CD4-positive, alpha-beta memory T cell (primary cell): ENCODE measurements at regions of chr1 and their contacts with region 1.

Region 1: GRCh38 chr1:46223472-46223943 is 20.4 kb downstream of the LURAP1 start:
- DNase-seq: peak; percentile 41 to 59 (median 49)
- H3K4me3 ChIP-seq: no peak overlapping the region
- H3K4me3 Mint-ChIP-seq: no peak overlapping the region
- H3K27ac ChIP-seq: no peak overlapping the region
- H3K27ac Mint-ChIP-seq: peak overlapping the region in 1 of 7 donors; percentile 74
- H3K4me1 ChIP-seq: no peaks in the 10 kb centered on the region
- H3K4me1 Mint-ChIP-seq: peaks cover 0 to 5% (median 4%) of the 10 kb centered on the region in 4 donors
- H3K27me3 ChIP-seq: no peaks in the 10 kb centered on the region
- H3K27me3 Mint-ChIP-seq: no peaks in the 10 kb centered on the region

Region 2: GRCh38 chr1:46036894-46037839 is 186.3 kb before region 1 on chr1:
- CTCF ChIA-PET with region 1: interaction called, 25 read pairs
- POLR2A ChIA-PET with region 1: no interaction called
- intact Hi-C with region 1: loop called (anchors 1 kb)
- DNase-seq: peak; percentile 73 to 76 (median 75)
- H3K4me3 ChIP-seq: no peak overlapping the region
- H3K4me3 Mint-ChIP-seq: no peak overlapping the region
- H3K27ac ChIP-seq: no peak overlapping the region
- H3K27ac Mint-ChIP-seq: no peak overlapping the region
- H3K4me1 ChIP-seq: no peaks in the 10 kb centered on the region
- H3K4me1 Mint-ChIP-seq: no peaks in the 10 kb centered on the region
- H3K27me3 ChIP-seq: no peaks in the 10 kb centered on the region
- H3K27me3 Mint-ChIP-seq: no peaks in the 10 kb centered on the region

Region 3: GRCh38 chr1:46179138-46180081 is 44.1 kb before region 1 on chr1:
- CTCF ChIA-PET with region 1: interaction called, 12 read pairs
- POLR2A ChIA-PET with region 1: no interaction called
- intact Hi-C with region 1: loop called (anchors 1 kb)
- DNase-seq: peak; percentile 51 to 66 (median 55)
- H3K4me3 ChIP-seq: no peak overlapping the region
- H3K4me3 Mint-ChIP-seq: no peak overlapping the region
- H3K27ac ChIP-seq: no peak overlapping the region
- H3K27ac Mint-ChIP-seq: no peak overlapping the region
- H3K4me1 ChIP-seq: no peaks in the 10 kb centered on the region
- H3K4me1 Mint-ChIP-seq: peaks cover 0 to 3% (median under 1%) of the 10 kb centered on the region in 4 donors
- H3K27me3 ChIP-seq: no peaks in the 10 kb centered on the region
- H3K27me3 Mint-ChIP-seq: no peaks in the 10 kb centered on the region

Region 4: DNA sequence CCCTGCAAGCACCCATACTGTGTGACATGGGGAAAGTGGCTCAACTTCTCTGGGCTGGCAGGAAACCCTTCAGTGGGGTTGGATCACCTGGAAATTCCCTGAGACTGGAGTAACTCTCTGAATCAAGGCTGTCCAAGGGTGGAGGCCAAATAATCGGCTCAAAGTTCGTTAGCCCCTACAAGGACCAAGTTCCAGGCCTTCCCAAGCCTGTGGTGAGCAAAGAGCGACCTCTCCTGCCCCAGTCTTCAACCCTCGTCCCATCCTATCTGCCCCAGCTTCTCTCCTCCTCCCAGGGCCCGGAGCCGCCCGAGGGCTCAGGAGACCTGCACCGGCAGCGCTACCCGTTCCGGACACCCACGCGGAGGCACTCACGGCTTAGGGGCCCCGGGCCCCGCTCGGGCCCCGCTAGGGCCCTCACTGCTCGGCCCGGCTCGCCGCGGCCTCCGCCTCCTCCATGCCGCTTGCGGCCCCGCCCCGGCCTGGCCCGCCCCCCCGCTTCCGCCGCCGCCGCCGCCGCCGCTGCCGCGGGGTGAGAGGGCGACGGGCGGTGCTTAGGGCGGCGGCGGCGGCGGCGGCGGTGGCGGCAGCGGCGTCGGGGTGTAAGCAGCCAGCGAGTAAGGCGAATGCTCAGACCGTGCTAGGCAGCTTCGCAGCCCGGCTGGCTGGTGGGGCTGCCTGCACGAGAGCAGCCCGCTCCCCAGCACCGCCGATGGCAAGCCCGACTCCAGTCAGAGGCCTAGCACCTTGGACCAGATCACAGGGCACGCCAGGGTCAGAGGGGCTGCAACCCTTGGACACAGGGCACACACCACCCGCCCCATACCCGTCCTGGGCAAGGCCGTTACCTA is 25.3 kb before region 1 on chr1 and contains the start of gene POMGNT1:
- CTCF ChIA-PET with region 1: interaction called, 14 read pairs
- POLR2A ChIA-PET with region 1: interaction called, 3 read pairs
- intact Hi-C with region 1: no loop called
- DNase-seq: peak; percentile 69 to 81 (median 78)
- H3K4me3 ChIP-seq: peak within 1 kb of the TSS; percentile 78 to 86
- H3K4me3 Mint-ChIP-seq: peak within 1 kb of the TSS; percentile 83 to 89 (median 88)
- H3K27ac ChIP-seq: peak within 1 kb of the TSS; percentile 76
- H3K27ac Mint-ChIP-seq: peak within 1 kb of the TSS; percentile 38 to 88 (median 79)
- H3K4me1 ChIP-seq: peaks cover 33% of the 10 kb centered on the region
- H3K4me1 Mint-ChIP-seq: peaks cover 12 to 39% (median 25%) of the 10 kb centered on the region in 4 donors
- H3K27me3 ChIP-seq: no peaks in the 10 kb centered on the region
- H3K27me3 Mint-ChIP-seq: peaks cover 0 to 1% of the 10 kb centered on the region in 2 donors
- total RNA-seq, gene POMGNT1: 36.0 to 41.4 TPM

Region 5: GRCh38 chr1:46236882-46237281 is 13.4 kb after region 1 on chr1:
- CTCF ChIA-PET with region 1: interaction called, 25 read pairs
- POLR2A ChIA-PET with region 1: no interaction called
- intact Hi-C with region 1: no loop called
- DNase-seq: no peak
- H3K4me3 ChIP-seq: no peak overlapping the region
- H3K4me3 Mint-ChIP-seq: no peak overlapping the region
- H3K27ac ChIP-seq: no peak overlapping the region
- H3K27ac Mint-ChIP-seq: no peak overlapping the region
- H3K4me1 ChIP-seq: no peaks in the 10 kb centered on the region
- H3K4me1 Mint-ChIP-seq: no peaks in the 10 kb centered on the region
- H3K27me3 ChIP-seq: no peaks in the 10 kb centered on the region
- H3K27me3 Mint-ChIP-seq: peaks cover 2 to 3% of the 10 kb centered on the region in 2 donors

Region 6: DNA sequence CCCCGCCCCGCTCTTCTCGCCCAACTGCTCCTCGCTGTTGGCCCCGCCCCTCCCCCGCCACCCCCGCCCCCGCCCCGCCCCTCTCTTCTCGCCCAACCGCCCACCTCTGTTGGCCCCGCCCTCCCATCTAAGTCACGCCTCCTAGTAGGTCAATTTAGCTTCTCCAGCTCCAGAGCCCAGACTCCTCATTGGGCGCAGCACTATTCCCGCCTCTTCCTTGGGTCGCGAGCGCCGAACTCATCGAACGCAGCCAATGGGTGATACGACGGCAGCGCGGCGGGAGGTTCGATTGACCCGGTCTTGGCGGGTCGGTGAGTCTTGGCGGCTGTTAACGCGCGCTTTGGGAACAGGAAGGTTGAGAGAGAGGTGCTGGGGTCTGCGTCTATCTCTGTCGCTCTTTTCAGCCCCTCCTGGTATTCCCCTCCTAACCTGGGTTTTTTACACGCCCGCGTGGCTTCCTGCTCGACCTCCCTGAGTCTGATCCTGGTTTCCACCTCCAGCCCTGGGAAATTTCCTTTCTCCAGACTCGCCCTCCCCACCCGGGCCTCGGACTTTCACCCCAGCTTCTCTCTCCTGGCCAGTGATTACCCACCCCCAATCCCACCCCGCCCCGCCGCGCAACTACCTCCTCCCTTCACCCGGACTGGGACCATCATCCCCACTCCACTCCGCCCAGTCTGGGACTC is 24.1 kb after region 1 on chr1 and contains the start of gene RAD54L:
- CTCF ChIA-PET with region 1: interaction called, 25 read pairs
- POLR2A ChIA-PET with region 1: no interaction called
- intact Hi-C with region 1: loop called (anchors 2 kb)
- DNase-seq: peak; percentile 94 to 98 (median 96)
- H3K4me3 ChIP-seq: peak within 1 kb of the TSS; percentile 85 to 91
- H3K4me3 Mint-ChIP-seq: peak within 1 kb of the TSS; percentile 89 to 95 (median 92)
- H3K27ac ChIP-seq: peak within 1 kb of the TSS; percentile 53
- H3K27ac Mint-ChIP-seq: peak within 1 kb of the TSS; percentile 61 to 90 (median 87)
- H3K4me1 ChIP-seq: peaks cover 13% of the 10 kb centered on the region
- H3K4me1 Mint-ChIP-seq: peaks cover 11 to 16% (median 14%) of the 10 kb centered on the region in 4 donors
- H3K27me3 ChIP-seq: no peaks in the 10 kb centered on the region
- H3K27me3 Mint-ChIP-seq: no peaks in the 10 kb centered on the region
- total RNA-seq, gene RAD54L: 1.0 to 1.1 TPM

Region 7: GRCh38 chr1:46340404-46341221 is 117.1 kb after region 1 on chr1 and contains the start of gene NSUN4:
- CTCF ChIA-PET with region 1: interaction called, 34 read pairs
- POLR2A ChIA-PET with region 1: no interaction called
- intact Hi-C with region 1: no loop called
- DNase-seq: peak; percentile 87 to 93 (median 88)
- H3K4me3 ChIP-seq: peak within 1 kb of the TSS; percentile 89 to 100
- H3K4me3 Mint-ChIP-seq: peak within 1 kb of the TSS; percentile 99 to 100 (median 100)
- H3K27ac ChIP-seq: peak within 1 kb of the TSS; percentile 97
- H3K27ac Mint-ChIP-seq: peak within 1 kb of the TSS; percentile 95 to 100 (median 100)
- H3K4me1 ChIP-seq: peaks cover 22% of the 10 kb centered on the region
- H3K4me1 Mint-ChIP-seq: peaks cover 25 to 50% (median 36%) of the 10 kb centered on the region in 4 donors
- H3K27me3 ChIP-seq: no peaks in the 10 kb centered on the region
- H3K27me3 Mint-ChIP-seq: no peaks in the 10 kb centered on the region
- total RNA-seq, gene NSUN4: 26.4 to 26.9 TPM

Region 8: DNA sequence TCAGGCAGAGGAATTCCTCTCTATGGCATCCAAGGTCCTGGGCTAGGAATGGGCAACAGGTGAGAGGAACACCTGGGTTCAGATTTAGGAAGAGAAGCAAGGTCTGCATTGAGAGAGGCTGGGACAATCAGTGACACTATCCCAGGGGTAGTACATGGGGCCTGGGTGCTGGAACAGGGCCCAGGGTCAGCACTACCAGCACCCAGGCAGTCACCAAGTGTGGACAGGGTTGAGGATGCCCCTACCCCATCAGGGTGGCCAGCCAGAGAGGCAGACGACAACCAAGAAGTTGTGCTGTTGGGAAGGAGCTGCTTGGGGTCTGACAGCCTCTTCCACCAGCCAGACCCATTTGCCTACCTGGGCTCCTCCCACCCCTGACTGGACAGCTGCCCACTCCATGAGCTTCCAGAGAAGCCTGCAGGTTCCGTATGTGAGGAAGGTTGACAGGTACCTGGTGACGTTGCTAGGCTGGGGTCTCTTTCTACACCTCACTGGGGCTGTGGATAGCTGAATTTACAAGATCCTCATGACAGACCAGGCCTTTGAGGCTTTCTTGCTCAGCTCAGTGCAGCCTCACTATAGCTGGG is 703.8 kb after region 1 on chr1:
- CTCF ChIA-PET with region 1: no interaction called
- POLR2A ChIA-PET with region 1: no interaction called
- intact Hi-C with region 1: no loop called
- DNase-seq: no peak
- H3K4me3 ChIP-seq: no peak overlapping the region
- H3K4me3 Mint-ChIP-seq: no peak overlapping the region
- H3K27ac ChIP-seq: no peak overlapping the region
- H3K27ac Mint-ChIP-seq: no peak overlapping the region
- H3K4me1 ChIP-seq: no peaks in the 10 kb centered on the region
- H3K4me1 Mint-ChIP-seq: no peaks in the 10 kb centered on the region
- H3K27me3 ChIP-seq: no peaks in the 10 kb centered on the region
- H3K27me3 Mint-ChIP-seq: peaks cover 25 to 36% of the 10 kb centered on the region in 2 donors